ENCODE measurements at regions of chr6 and their contacts with region 1.

Region 1: DNA sequence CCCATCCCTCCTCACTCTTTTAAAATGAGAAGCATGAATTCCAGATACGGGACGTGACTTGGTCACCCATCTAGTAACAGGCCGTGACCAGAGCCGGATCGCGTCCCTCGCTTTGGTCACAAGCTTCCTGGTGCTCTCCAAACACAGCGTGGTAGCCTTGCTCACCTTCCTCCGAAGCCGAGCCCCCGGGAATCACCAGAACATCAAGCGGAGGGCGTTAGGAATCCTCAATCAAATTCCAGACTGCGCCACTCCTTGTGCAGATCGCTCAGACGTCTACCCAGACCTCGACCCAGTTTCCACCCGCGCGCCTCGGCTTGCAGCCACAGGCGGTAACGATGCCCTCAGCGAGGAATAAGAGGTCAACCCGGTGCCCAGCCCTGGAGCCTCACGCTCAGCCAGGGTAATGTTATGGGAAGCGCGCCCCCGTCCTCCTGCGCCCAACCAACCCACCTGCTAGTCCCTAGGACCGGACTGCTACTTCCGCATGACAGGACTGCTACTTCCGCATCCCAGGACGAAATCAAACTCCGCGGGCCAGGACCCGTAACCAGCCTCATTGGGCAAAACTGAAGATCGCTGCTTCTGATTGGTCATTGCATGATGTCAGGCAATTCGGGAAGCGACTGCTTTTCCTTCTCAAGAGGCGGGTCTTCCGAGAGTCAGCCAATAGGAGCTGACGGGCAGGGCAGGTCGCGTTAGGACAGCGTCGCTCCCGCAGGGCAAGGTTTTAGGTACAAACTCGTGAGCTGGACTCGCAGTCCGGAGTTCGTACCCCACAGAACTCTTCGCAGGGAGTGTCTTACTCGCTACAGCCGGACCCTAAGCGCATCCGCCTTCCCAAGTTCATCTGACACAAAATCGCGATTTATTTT is at the start of gene MTFR2:
- DNase-seq: peak; percentile 97
- H3K4me3 ChIP-seq: peak within 1 kb of the TSS; percentile 56 to 57
- H3K27ac ChIP-seq: peak within 1 kb of the TSS; percentile 47 to 52
- H3K4me1 ChIP-seq: peaks cover 0 to 15% (median 6%) of the 10 kb centered on the region in 4 donors
- H3K27me3 ChIP-seq: no peaks in the 10 kb centered on the region
- CTCF ChIP-seq: no peak

Region 2: GRCh38 chr6:136289579-136290409 is 39.7 kb after region 1 on chr6 and contains the start of gene BCLAF1:
- intact Hi-C with region 1: loop called (anchors 2 kb)
- DNase-seq: peak; percentile 99 to 100
- H3K4me3 ChIP-seq: peak within 1 kb of the TSS; percentile 85 to 95
- H3K27ac ChIP-seq: peak within 1 kb of the TSS; percentile 100
- H3K4me1 ChIP-seq: peaks cover 4 to 45% (median 33%) of the 10 kb centered on the region in 4 donors
- H3K27me3 ChIP-seq: no peaks in the 10 kb centered on the region
- CTCF ChIP-seq: peak in 1 of 2 experiments; percentile 18